ENCODE measurements at regions of chr7 and their contacts with region 1.

Region 1: DNA sequence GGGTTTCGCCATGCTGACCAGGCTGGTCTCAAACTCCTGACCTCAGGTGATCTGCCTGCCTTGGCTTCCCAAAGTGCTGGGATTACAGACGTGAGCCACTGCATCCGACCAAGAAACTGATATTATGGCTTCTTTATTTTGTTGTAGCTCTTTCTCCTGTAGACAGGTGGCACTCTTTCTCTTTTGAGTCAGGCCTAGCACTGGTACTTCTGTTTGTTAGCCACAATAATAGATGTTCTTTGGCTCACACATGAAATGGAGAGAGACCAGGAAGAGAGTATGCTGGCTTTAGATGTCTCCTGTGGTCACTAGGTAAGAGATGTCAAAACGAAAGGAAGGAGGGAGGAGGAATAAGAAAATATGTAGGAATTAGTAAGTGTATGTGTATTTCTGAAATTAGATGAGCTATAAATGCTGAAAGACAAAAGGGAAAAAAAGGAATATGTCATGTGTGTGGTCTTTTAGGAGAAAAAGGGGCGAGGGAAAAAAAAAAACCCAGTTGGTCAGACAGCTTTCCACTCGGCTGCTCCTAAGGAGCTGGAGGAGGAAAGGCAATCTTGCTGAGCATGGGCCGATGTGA is 78.7 kb downstream of the CLEC2L start:
- DNase-seq: no peak
- ATAC-seq: peak; percentile 87
- H3K4me3 ChIP-seq: no peak overlapping the region
- H3K27ac ChIP-seq: no peak overlapping the region
- H3K4me1 ChIP-seq: no peaks in the 10 kb centered on the region
- H3K27me3 ChIP-seq: no peaks in the 10 kb centered on the region
- CTCF ChIP-seq: peak; percentile 41 to 59 (median 57)
- EP300 ChIP-seq: no peak
- POLR2A ChIP-seq: no peak
- RAD21 ChIP-seq: peak; percentile 56

Region 2: GRCh38 chr7:139505563-139505962 is 96.7 kb before region 1 on chr7:
- CTCF ChIA-PET with region 1: interaction called, 6 read pairs
- POLR2A ChIA-PET with region 1: no interaction called
- RAD21 ChIA-PET with region 1: no interaction called
- SMC1A ChIA-PET with region 1: no interaction called
- in situ Hi-C with region 1: no loop called
- intact Hi-C with region 1: loop called (anchors 10 kb)
- DNase-seq: no peak
- ATAC-seq: peak; percentile 43; the same call in 1 of the 3 replicates
- H3K4me3 ChIP-seq: no peak overlapping the region
- H3K27ac ChIP-seq: no peak overlapping the region
- H3K4me1 ChIP-seq: no peaks in the 10 kb centered on the region
- H3K27me3 ChIP-seq: no peaks in the 10 kb centered on the region
- CTCF ChIP-seq: peak; percentile 13 to 34 (median 18); a peak in 3 of 6 replicates
- EP300 ChIP-seq: no peak
- POLR2A ChIP-seq: no peak
- RAD21 ChIP-seq: 0 out of 2 replicates have a peak, but pooled peaks have one; percentile 8

Region 3: DNA sequence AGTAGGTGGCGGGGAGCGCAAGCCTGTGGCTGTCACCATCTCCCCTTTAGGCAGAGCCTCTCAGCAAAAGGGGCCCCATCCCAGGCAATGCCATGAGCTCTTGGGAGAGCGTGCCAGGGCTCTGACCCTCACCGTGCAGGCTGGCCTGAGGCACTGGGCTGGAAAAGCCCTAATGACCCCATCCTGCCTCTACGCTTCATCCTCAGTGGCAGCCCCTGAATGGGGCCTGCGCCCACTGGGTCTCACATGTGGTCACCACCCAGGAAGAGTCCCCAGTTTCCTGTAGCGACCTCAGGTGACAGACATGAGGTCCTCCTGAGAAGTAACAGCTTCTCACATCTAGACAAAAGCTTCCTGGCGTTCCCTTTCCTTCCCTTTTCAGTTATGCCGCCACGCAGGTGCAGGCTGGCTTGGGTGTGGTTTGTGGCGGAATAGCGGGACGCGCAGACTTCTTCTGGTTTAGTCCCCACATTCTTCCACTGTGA is 19.5 kb before region 1 on chr7:
- CTCF ChIA-PET with region 1: interaction called, 51 read pairs
- POLR2A ChIA-PET with region 1: no interaction called
- RAD21 ChIA-PET with region 1: interaction called, 5 read pairs
- SMC1A ChIA-PET with region 1: interaction called, 3 read pairs
- in situ Hi-C with region 1: no loop called
- intact Hi-C with region 1: no loop called
- DNase-seq: no peak
- ATAC-seq: no peak
- H3K4me3 ChIP-seq: no peak overlapping the region
- H3K27ac ChIP-seq: no peak overlapping the region
- H3K4me1 ChIP-seq: no peaks in the 10 kb centered on the region
- H3K27me3 ChIP-seq: no peaks in the 10 kb centered on the region
- CTCF ChIP-seq: no peak
- EP300 ChIP-seq: no peak
- POLR2A ChIP-seq: no peak
- RAD21 ChIP-seq: no peak

Region 4: DNA sequence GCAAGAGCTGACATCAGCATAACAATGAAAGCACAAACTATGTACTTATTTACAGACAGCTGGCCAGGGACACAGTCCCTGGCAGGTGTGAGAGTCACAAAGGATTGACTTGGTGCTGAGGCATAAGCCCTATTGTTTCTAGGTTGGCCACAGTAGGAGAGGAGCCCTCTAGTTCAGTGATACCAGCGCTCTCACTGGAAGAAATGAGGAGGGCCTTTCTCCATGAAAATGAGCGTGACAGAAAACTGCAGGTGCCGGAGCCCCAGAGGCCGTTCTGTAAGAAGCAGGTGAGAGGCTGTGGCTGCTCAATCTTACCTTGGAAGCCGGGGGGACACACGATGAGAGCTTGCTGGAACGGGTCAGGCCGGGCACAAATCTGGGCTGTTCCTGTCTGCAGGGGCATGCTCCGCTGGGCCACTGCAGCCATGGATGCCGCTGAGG is 11.8 kb after region 1 on chr7:
- CTCF ChIA-PET with region 1: interaction called, 43 read pairs
- POLR2A ChIA-PET with region 1: no interaction called
- RAD21 ChIA-PET with region 1: interaction called, 5 read pairs
- SMC1A ChIA-PET with region 1: interaction called, 5 read pairs
- in situ Hi-C with region 1: no loop called
- intact Hi-C with region 1: no loop called
- DNase-seq: no peak
- ATAC-seq: no peak
- H3K4me3 ChIP-seq: no peak overlapping the region
- H3K27ac ChIP-seq: no peak overlapping the region
- H3K4me1 ChIP-seq: no peaks in the 10 kb centered on the region
- H3K27me3 ChIP-seq: no peaks in the 10 kb centered on the region
- CTCF ChIP-seq: no peak
- EP300 ChIP-seq: no peak
- POLR2A ChIP-seq: no peak
- RAD21 ChIP-seq: no peak

Region 5: DNA sequence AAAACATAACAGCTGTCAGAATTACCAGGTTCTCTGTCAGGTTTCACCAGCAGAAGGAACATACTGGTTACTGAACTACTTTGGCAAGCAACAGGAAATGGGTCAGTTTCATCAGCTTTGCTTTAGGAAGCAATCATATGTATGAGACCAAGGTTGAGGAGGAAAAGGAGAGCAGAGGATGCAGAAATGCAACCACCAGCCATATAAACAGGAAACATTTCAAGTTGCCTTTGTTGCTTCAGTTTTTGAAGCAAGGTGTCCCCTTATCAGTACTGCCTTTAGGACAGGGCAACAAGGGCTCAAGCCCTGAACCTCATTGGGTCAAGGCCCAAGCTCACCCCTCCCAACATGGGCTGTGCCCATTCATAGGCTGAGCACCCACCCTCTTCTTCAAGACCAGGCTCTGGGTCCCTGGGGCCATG is 165.3 kb after region 1 on chr7:
- CTCF ChIA-PET with region 1: interaction called, 3 read pairs
- POLR2A ChIA-PET with region 1: no interaction called
- RAD21 ChIA-PET with region 1: no interaction called
- SMC1A ChIA-PET with region 1: no interaction called
- in situ Hi-C with region 1: no loop called
- intact Hi-C with region 1: loop called (anchors 5 kb)
- DNase-seq: peak; percentile 48
- ATAC-seq: peak; percentile 79
- H3K4me3 ChIP-seq: no peak overlapping the region
- H3K27ac ChIP-seq: peak overlapping the region; percentile 35; the same call in 1 of the 2 replicates
- H3K4me1 ChIP-seq: peaks cover 31% of the 10 kb centered on the region
- H3K27me3 ChIP-seq: no peaks in the 10 kb centered on the region
- CTCF ChIP-seq: no peak
- EP300 ChIP-seq: no peak
- POLR2A ChIP-seq: no peak
- RAD21 ChIP-seq: no peak

Region 6: GRCh38 chr7:139950848-139951512 is 348.7 kb after region 1 on chr7:
- CTCF ChIA-PET with region 1: no interaction called
- POLR2A ChIA-PET with region 1: no interaction called
- RAD21 ChIA-PET with region 1: no interaction called
- SMC1A ChIA-PET with region 1: no interaction called
- in situ Hi-C with region 1: no loop called
- intact Hi-C with region 1: no loop called
- DNase-seq: no peak
- ATAC-seq: no peak
- H3K4me3 ChIP-seq: no peak overlapping the region
- H3K27ac ChIP-seq: no peak overlapping the region
- H3K4me1 ChIP-seq: no peaks in the 10 kb centered on the region
- H3K27me3 ChIP-seq: no peaks in the 10 kb centered on the region
- CTCF ChIP-seq: no peak
- EP300 ChIP-seq: no peak
- POLR2A ChIP-seq: no peak
- RAD21 ChIP-seq: no peak